ENCODE measurements at regions of chr2 and their contacts with region 1.

Region 1: GRCh38 chr2:136966485-136966884 is 201.1 kb downstream of the THSD7B start:
- DNase-seq: no peak
- ATAC-seq: no peak

Region 2: GRCh38 chr2:136098441-136098840 is 868.0 kb before region 1 on chr2:
- intact Hi-C with region 1: no loop called
- DNase-seq: no peak
- ATAC-seq: peak; percentile 30

Region 3: DNA sequence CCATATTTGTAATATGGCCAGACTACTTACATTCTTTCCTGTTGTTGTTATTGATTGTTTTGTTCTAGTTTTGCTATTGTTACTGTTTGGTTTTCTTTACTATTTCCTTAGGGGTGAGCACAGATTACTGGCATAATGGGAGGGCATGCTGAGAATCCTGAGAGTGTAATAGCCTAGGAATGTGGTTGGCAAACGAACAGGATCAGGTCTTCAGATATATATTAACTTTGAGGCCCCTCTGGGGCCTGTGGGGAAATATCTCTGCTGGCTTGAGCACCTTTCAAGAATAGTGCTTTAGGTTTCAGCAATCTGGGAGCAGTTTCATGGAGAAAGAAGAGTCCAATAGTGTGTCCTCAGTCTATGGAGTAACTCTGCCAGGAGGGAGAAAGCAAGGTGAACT is 56.7 kb before region 1 on chr2:
- intact Hi-C with region 1: no loop called
- DNase-seq: no peak
- ATAC-seq: no peak

Region 4: DNA sequence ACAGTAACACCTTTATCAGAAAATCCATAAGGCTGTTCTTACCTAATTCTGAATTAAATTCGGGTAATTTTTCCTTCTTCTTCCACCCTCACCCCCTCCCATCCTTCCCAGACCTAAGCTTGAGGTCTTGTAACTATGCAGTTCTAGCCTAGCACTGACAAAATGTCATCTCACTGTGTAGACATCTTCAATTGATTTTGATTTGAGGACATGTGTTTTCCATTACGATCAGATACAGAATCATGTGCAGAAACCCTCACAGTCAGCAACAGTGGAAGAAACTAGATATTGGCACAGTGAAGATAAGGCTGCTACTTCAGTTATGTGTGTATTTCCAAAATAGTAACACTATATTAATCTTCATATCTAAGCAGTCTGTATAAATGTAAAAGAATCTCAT is 43.5 kb after region 1 on chr2:
- intact Hi-C with region 1: loop called (anchors 1 kb)
- DNase-seq: no peak
- ATAC-seq: no peak